SK-N-SH (cell line): ENCODE measurements at regions of chr18 and their contacts with region 1.

Region 1: DNA sequence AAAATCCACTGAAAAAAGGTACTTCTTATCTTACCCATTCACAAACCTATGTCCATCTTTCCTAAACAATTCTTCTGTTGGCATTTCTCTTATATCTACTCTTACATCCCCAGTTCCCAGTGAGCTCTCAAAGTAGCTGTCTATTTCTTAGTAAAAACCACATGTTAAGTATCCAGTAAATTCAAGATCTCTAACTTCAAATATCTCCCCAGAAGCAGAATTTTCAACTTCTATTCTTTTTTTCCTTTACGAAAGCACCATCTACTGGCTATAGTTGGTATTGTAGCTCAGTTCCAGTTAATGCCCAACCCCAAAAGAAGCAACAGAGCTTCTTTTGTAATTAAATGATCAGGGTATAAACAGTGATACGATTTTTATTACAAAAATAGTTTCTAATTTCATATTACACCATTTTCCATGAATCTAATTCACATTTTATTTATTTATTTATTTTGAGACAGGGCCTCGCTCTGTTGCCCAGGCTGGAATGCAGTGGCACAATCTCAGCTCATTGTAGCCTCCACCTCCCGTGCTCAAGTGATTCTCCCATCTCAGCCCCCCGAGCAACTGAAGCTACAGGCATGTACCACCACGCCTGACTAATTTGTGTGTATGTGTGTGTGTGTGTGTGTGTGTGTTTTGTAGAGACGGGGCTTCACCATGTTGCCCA is 28.5 kb downstream of the HRH4 start:
- DNase-seq: peak; percentile 53
- H3K4me3 ChIP-seq: no peak overlapping the region; a peak in 1 of 4 replicates
- H3K27ac ChIP-seq: no peak overlapping the region
- H3K4me1 ChIP-seq: peaks cover 0 to 10% of the 10 kb centered on the region in 2 experiments; a peak in 1 of 4 replicates
- H3K27me3 ChIP-seq: no peaks in the 10 kb centered on the region
- CTCF ChIP-seq: peak; percentile 82
- EP300 ChIP-seq: no peak
- RAD21 ChIP-seq: peak; percentile 73

Region 2: DNA sequence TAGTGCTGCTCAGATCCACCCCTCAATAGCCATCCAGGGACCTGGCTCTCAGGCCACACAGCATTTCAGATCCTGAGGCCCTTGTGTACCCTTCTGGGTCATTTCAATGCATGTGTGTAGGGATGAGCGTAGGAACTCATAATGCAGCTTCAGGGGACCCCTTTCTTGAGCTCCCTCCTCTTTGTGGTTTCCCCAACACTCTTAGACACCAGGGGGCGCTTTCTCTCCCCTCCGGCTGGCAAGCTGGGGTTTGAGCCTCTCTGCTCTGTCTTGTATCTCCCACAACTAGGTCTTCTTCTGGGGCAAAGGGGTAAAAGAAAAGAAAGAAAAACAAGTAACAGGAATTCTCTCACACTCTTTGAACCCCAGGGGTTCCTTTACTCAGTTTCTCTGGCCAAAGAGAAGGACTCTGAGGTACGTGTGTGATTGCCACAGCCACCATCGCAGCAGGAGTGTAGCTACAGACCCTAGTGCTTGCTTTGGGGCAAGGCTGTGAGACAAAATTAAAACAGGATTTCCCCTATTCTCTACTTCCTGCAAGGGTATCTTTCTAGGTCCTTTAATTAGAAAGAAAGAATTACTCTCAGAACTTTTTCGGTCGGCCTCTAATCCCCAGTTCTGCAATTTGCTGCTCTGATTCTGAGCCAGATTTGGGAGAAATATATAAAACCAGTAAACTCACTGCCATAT is 312.1 kb before region 1 on chr18:
- CTCF ChIA-PET with region 1: interaction called, 46 read pairs
- POLR2A ChIA-PET with region 1: no interaction called
- DNase-seq: peak; percentile 71
- H3K4me3 ChIP-seq: peak overlapping the region in 1 of 2 experiments; percentile 35; a peak in 1 of 4 replicates
- H3K27ac ChIP-seq: no peak overlapping the region
- H3K4me1 ChIP-seq: no peaks in the 10 kb centered on the region
- H3K27me3 ChIP-seq: no peaks in the 10 kb centered on the region
- CTCF ChIP-seq: peak; percentile 78
- EP300 ChIP-seq: no peak
- RAD21 ChIP-seq: peak; percentile 67

Region 3: GRCh38 chr18:24362758-24363157 is 126.2 kb before region 1 on chr18:
- CTCF ChIA-PET with region 1: interaction called, 171 read pairs
- POLR2A ChIA-PET with region 1: no interaction called
- DNase-seq: no peak
- H3K4me3 ChIP-seq: no peak overlapping the region
- H3K27ac ChIP-seq: no peak overlapping the region
- H3K4me1 ChIP-seq: no peaks in the 10 kb centered on the region
- H3K27me3 ChIP-seq: no peaks in the 10 kb centered on the region
- CTCF ChIP-seq: no peak
- EP300 ChIP-seq: no peak
- RAD21 ChIP-seq: no peak

Region 4: GRCh38 chr18:24475926-24476589 is 12.9 kb before region 1 on chr18:
- CTCF ChIA-PET with region 1: interaction called, 17 read pairs
- POLR2A ChIA-PET with region 1: no interaction called
- DNase-seq: no peak
- H3K4me3 ChIP-seq: no peak overlapping the region
- H3K27ac ChIP-seq: no peak overlapping the region
- H3K4me1 ChIP-seq: no peaks in the 10 kb centered on the region
- H3K27me3 ChIP-seq: no peaks in the 10 kb centered on the region; the same call in 1 of the 2 replicates
- CTCF ChIP-seq: no peak
- EP300 ChIP-seq: no peak
- RAD21 ChIP-seq: no peak

Region 5: DNA sequence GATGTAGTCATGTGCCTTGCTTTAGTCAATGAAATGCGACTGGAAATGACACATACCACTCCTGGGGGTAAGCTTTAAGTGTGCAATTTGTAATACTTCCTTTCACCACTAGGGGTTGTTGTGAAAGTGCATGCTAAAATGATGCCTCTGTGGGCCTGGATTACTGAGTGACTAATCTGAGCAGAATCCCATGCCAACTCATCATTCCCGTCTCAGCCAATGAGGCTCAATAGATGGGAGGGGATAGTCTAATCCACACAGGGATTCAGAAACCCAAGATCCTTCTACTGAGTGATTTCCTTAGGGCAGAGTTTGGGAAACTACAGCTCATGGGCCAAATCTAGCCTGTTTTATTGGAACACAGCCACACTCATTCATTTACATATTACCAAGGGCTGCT is 25.5 kb after region 1 on chr18:
- CTCF ChIA-PET with region 1: interaction called, 13 read pairs
- POLR2A ChIA-PET with region 1: no interaction called
- DNase-seq: peak; percentile 39
- H3K4me3 ChIP-seq: no peak overlapping the region
- H3K27ac ChIP-seq: no peak overlapping the region
- H3K4me1 ChIP-seq: no peaks in the 10 kb centered on the region
- H3K27me3 ChIP-seq: no peaks in the 10 kb centered on the region
- CTCF ChIP-seq: peak; percentile 62
- EP300 ChIP-seq: no peak
- RAD21 ChIP-seq: no peak

Region 6: GRCh38 chr18:24582771-24583170 is 93.8 kb after region 1 on chr18:
- CTCF ChIA-PET with region 1: interaction called, 16 read pairs
- POLR2A ChIA-PET with region 1: no interaction called
- DNase-seq: no peak
- H3K4me3 ChIP-seq: no peak overlapping the region
- H3K27ac ChIP-seq: no peak overlapping the region
- H3K4me1 ChIP-seq: peaks cover 0 to 11% of the 10 kb centered on the region in 2 experiments; a peak in 1 of 4 replicates
- H3K27me3 ChIP-seq: no peaks in the 10 kb centered on the region
- CTCF ChIP-seq: no peak
- EP300 ChIP-seq: no peak
- RAD21 ChIP-seq: no peak

Region 7: DNA sequence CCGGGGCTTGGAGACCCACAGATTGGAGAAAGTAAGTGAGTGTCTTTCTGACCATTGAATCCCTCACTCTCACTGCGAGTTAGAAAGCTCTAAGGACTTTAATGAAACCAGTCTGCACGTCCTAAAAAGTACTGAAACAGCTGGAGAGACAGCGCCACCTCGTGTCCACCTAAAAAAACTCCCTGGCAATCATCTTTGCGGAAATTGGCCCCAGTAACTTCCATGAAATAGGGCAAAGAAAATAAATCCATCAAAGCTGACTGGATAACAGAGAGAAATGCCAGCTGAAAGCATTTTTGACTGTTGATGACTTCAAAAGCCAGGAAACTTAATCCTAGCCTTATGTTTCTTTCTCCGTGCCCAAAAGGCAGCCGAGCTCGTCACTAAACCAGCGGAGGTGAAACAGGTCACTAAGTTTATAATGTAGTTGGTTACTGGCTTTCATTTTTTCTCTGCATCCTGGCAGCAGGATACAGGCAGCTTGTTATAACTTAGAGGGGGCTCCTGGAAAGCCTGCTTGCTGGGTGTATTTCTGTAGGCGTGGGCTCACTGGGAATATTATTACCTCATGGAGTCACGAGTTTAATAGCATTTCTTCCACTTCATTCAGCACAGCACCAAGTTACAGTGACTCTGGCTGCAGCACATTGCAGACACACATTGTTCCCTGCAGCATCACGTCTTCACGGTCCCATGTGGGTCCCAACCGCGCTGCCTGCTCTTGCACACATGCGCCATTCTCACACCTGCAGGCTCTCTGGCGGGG is 238.0 kb after region 1 on chr18:
- CTCF ChIA-PET with region 1: interaction called, 55 read pairs
- POLR2A ChIA-PET with region 1: no interaction called
- DNase-seq: peak; percentile 61
- H3K4me3 ChIP-seq: peak overlapping the region in 1 of 2 experiments; percentile 43; a peak in 1 of 4 replicates
- H3K27ac ChIP-seq: no peak overlapping the region
- H3K4me1 ChIP-seq: peaks cover 0 to 3% of the 10 kb centered on the region in 2 experiments; a peak in 2 of 4 replicates
- H3K27me3 ChIP-seq: peaks cover 3% of the 10 kb centered on the region; the same call in 1 of the 2 replicates
- CTCF ChIP-seq: peak; percentile 89
- EP300 ChIP-seq: no peak
- RAD21 ChIP-seq: peak; percentile 93

Region 8: DNA sequence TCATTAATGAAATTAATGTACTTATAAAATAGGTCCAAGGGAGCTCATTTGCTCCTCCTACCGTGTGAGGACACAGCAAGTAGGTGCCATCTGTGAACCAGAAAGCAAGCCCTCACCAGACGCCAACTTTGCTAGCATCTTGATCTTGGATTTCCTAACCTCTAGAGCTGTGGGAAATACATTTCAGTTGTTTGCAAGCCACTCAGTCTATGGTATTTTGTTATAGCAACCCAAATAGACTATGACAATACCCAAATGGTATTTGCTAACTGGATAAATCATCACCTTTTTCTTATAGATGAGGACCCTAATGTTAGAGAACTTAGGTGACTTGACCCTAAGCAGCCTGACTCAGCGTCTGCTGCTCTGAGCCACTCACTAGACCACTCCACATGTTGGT is 351.1 kb after region 1 on chr18:
- CTCF ChIA-PET with region 1: no interaction called
- POLR2A ChIA-PET with region 1: no interaction called
- DNase-seq: no peak
- H3K4me3 ChIP-seq: no peak overlapping the region
- H3K27ac ChIP-seq: no peak overlapping the region
- H3K4me1 ChIP-seq: no peaks in the 10 kb centered on the region
- H3K27me3 ChIP-seq: no peaks in the 10 kb centered on the region
- CTCF ChIP-seq: no peak
- EP300 ChIP-seq: no peak
- RAD21 ChIP-seq: no peak